GM12878 (cell line): ENCODE measurements at regions of chr4 and their contacts with region 1.

Region 1: DNA sequence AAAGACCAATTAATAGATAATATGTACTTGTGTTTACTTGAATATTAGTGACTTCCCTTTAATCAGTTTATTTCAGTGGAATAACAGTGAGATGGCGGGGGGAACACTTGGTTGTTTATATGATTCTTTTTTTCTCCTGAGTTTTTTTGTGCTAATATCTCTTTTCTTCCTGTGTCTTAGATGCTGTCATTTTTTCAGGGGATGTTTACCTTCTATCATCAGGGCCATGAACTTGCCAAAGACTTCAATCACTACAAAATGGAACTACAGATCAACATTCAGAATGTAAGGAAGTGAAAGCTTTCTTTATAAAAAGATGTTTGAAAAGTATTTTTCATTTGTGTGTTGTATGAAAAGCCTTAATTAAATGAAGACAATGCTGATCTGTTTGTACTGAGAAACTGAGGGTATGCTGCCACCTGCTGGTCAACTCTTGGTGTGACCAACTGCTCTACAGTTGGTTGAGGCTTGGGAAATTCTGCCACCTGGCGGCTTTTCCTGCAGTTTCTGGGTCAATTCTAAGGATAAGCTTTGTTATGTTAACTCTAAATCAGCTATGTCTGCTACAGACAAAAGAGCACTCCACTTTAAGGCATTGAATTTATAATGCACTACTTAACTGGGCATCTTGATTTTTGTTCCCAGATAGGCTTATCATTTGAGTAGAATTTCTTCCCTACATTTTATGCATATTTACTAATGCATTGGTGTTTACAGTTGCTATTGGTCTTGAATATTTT is 134.8 kb downstream of the ARHGAP10 start:
- DNase-seq: peak; percentile 66
- ATAC-seq: peak; percentile 94
- H3K4me3 ChIP-seq: no peak overlapping the region
- H3K27ac ChIP-seq: no peak overlapping the region
- H3K4me1 ChIP-seq: 0 out of 2 replicates have a peak, but pooled peaks cover 2% of the 10 kb centered on the region
- H3K27me3 ChIP-seq: no peaks in the 10 kb centered on the region
- CTCF ChIP-seq: peak; percentile 92 to 100 (median 99); a peak in 5 of 6 replicates
- EP300 ChIP-seq: no peak
- POLR2A ChIP-seq: no peak
- RAD21 ChIP-seq: peak; percentile 100

Region 2: GRCh38 chr4:147123146-147123545 is 743.6 kb before region 1 on chr4:
- CTCF ChIA-PET with region 1: no interaction called
- POLR2A ChIA-PET with region 1: no interaction called
- RAD21 ChIA-PET with region 1: no interaction called
- SMC1A ChIA-PET with region 1: no interaction called
- in situ Hi-C with region 1: no loop called
- intact Hi-C with region 1: no loop called
- DNase-seq: no peak
- ATAC-seq: no peak
- H3K4me3 ChIP-seq: no peak overlapping the region
- H3K27ac ChIP-seq: no peak overlapping the region
- H3K4me1 ChIP-seq: peaks cover 2% of the 10 kb centered on the region; the same call in 1 of the 2 replicates
- H3K27me3 ChIP-seq: no peaks in the 10 kb centered on the region
- CTCF ChIP-seq: no peak
- EP300 ChIP-seq: no peak
- POLR2A ChIP-seq: no peak
- RAD21 ChIP-seq: no peak

Region 3: DNA sequence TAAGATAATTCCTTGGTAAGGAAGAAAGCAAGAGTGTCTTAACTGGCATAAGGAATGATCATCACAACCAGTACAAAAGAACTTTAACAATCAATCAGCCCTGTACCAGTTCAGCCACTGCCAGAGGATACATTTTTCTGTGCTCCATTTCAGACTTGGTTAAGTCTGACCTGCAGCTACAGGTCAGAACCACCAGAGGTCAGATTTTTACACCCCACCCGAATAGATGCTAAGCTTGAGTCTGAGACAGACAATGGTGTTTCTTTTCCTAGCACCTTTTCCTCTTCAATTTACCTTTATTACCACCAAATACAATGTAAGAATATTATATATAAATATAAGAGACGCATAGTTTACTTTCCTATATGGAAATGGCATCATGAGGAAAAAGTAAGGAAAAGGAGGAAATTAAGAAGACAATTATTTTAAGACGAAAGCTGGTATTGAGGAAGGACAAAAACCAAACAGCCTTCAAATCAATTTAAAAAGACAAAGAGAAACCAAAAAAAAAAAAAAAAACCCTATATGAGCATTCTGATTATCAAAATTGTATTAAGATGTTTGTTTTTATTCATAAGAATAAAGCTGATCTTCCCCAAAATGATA is 705.7 kb before region 1 on chr4:
- CTCF ChIA-PET with region 1: interaction called, 8 read pairs
- POLR2A ChIA-PET with region 1: no interaction called
- RAD21 ChIA-PET with region 1: interaction called, 4 read pairs
- SMC1A ChIA-PET with region 1: no interaction called
- in situ Hi-C with region 1: loop called (anchors 10 kb)
- intact Hi-C with region 1: loop called (anchors 5 kb)
- DNase-seq: no peak
- ATAC-seq: peak; percentile 89
- H3K4me3 ChIP-seq: no peak overlapping the region
- H3K27ac ChIP-seq: no peak overlapping the region
- H3K4me1 ChIP-seq: no peaks in the 10 kb centered on the region
- H3K27me3 ChIP-seq: peaks cover 0 to 7% of the 10 kb centered on the region in 2 experiments; a peak in 2 of 4 replicates
- CTCF ChIP-seq: peak; percentile 68 to 79 (median 71)
- EP300 ChIP-seq: no peak
- POLR2A ChIP-seq: no peak
- RAD21 ChIP-seq: peak; percentile 79

Region 4: GRCh38 chr4:147570616-147571015 is 296.1 kb before region 1 on chr4:
- CTCF ChIA-PET with region 1: no interaction called
- POLR2A ChIA-PET with region 1: no interaction called
- RAD21 ChIA-PET with region 1: no interaction called
- SMC1A ChIA-PET with region 1: no interaction called
- in situ Hi-C with region 1: no loop called
- intact Hi-C with region 1: no loop called
- DNase-seq: no peak
- ATAC-seq: no peak
- H3K4me3 ChIP-seq: no peak overlapping the region
- H3K27ac ChIP-seq: no peak overlapping the region
- H3K4me1 ChIP-seq: no peaks in the 10 kb centered on the region
- H3K27me3 ChIP-seq: no peaks in the 10 kb centered on the region
- CTCF ChIP-seq: no peak
- EP300 ChIP-seq: no peak
- POLR2A ChIP-seq: no peak
- RAD21 ChIP-seq: no peak

Region 5: DNA sequence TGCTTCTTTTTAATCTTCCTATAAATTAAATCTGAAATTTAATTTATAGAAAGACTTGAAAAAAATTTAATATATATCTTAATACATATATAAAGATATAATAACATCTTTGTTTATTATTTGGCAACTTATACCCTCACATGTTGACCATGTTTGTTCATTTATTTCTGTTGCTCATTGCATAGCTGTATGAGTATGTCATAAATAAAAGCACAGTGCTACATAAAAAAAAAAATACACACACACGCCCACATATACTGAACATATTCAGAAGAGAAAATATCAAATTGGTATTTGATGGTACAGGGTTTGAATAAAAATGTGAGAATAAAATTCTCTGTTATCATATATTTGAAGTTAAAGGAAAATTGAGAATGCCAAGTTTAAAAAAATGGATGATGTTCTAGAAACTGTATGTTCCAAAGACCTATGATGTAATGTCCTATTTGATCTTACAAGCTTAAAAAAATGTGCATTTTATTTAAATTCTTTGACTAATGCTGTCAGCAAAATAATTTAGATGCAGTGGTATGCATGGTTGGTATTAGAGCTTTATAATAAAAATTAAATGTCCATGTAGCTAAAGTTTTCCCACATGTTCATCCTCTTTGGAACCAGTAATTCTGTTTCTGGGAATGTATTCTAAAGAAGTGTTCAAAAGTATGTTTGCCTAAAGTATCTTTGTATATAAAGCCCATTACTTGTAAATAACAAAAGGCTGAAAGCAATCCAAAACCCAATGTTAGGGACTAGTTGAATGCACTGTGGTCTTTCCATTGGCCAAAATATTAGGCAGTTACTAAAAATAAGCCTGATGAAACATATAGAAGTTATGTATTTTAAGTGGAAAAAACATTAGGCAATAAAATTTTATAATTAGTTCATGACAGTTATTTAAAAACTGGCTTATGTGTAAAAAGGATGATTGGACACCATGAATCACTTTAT is 236.6 kb before region 1 on chr4:
- CTCF ChIA-PET with region 1: interaction called, 11 read pairs
- POLR2A ChIA-PET with region 1: no interaction called
- RAD21 ChIA-PET with region 1: interaction called, 12 read pairs
- SMC1A ChIA-PET with region 1: interaction called, 10 read pairs
- in situ Hi-C with region 1: no loop called
- intact Hi-C with region 1: no loop called
- DNase-seq: no peak
- ATAC-seq: no peak
- H3K4me3 ChIP-seq: no peak overlapping the region
- H3K27ac ChIP-seq: no peak overlapping the region
- H3K4me1 ChIP-seq: no peaks in the 10 kb centered on the region
- H3K27me3 ChIP-seq: no peaks in the 10 kb centered on the region
- CTCF ChIP-seq: no peak
- EP300 ChIP-seq: no peak
- POLR2A ChIP-seq: no peak
- RAD21 ChIP-seq: no peak

Region 6: GRCh38 chr4:147696863-147697262 is 169.8 kb before region 1 on chr4:
- CTCF ChIA-PET with region 1: interaction called, 54 read pairs
- POLR2A ChIA-PET with region 1: interaction called, 4 read pairs
- RAD21 ChIA-PET with region 1: interaction called, 15 read pairs
- SMC1A ChIA-PET with region 1: interaction called, 24 read pairs
- in situ Hi-C with region 1: no loop called
- intact Hi-C with region 1: no loop called
- DNase-seq: no peak
- ATAC-seq: no peak
- H3K4me3 ChIP-seq: no peak overlapping the region
- H3K27ac ChIP-seq: no peak overlapping the region
- H3K4me1 ChIP-seq: no peaks in the 10 kb centered on the region
- H3K27me3 ChIP-seq: peaks cover 0 to 5% of the 10 kb centered on the region in 2 experiments; a peak in 1 of 4 replicates
- CTCF ChIP-seq: no peak
- EP300 ChIP-seq: no peak
- POLR2A ChIP-seq: no peak
- RAD21 ChIP-seq: no peak

Region 7: DNA sequence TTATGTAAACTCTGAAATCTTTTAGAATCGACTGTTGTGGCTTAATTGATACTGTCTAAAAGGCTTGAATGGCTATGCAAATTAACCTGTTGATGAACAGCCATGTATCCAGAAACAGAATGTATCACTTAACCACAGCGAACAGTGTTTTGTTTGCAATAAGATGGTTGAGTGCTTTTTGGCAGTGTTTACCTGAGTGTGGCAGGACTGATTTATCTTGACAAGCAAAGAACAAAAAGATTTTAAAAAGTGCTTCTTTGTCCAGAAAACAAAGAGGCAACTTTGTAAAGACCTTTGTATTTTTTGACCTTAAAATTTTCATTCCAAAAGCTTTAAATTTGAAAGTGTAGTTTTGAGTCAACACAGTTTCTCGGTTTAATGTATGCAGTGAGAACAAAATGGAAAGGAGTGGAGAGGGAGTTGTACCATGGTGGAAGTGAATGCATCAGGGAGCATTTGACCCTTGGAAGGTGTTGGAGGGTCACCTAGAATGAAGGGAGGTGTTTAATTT is 116.8 kb before region 1 on chr4:
- CTCF ChIA-PET with region 1: interaction called, 13 read pairs
- POLR2A ChIA-PET with region 1: no interaction called
- RAD21 ChIA-PET with region 1: interaction called, 8 read pairs
- SMC1A ChIA-PET with region 1: interaction called, 9 read pairs
- in situ Hi-C with region 1: no loop called
- intact Hi-C with region 1: no loop called
- DNase-seq: peak; percentile 73
- ATAC-seq: peak; percentile 97
- H3K4me3 ChIP-seq: peak overlapping the region; percentile 39; the same call in 1 of the 2 replicates
- H3K27ac ChIP-seq: peak overlapping the region; percentile 52
- H3K4me1 ChIP-seq: peaks cover 17% of the 10 kb centered on the region
- H3K27me3 ChIP-seq: no peaks in the 10 kb centered on the region
- CTCF ChIP-seq: no peak
- EP300 ChIP-seq: peak; percentile 29 to 73; a peak in 2 of 4 replicates
- POLR2A ChIP-seq: no peak
- RAD21 ChIP-seq: no peak

Region 8: GRCh38 chr4:147793569-147794313 is 73.0 kb before region 1 on chr4:
- CTCF ChIA-PET with region 1: interaction called, 81 read pairs
- POLR2A ChIA-PET with region 1: no interaction called
- RAD21 ChIA-PET with region 1: interaction called, 36 read pairs
- SMC1A ChIA-PET with region 1: interaction called, 19 read pairs
- in situ Hi-C with region 1: no loop called
- intact Hi-C with region 1: no loop called
- DNase-seq: no peak
- ATAC-seq: peak; percentile 65
- H3K4me3 ChIP-seq: peak overlapping the region; percentile 4; the same call in 1 of the 2 replicates
- H3K27ac ChIP-seq: peak overlapping the region; percentile 72
- H3K4me1 ChIP-seq: peaks cover 37% of the 10 kb centered on the region
- H3K27me3 ChIP-seq: no peaks in the 10 kb centered on the region
- CTCF ChIP-seq: no peak
- EP300 ChIP-seq: no peak
- POLR2A ChIP-seq: no peak
- RAD21 ChIP-seq: no peak

Region 9: DNA sequence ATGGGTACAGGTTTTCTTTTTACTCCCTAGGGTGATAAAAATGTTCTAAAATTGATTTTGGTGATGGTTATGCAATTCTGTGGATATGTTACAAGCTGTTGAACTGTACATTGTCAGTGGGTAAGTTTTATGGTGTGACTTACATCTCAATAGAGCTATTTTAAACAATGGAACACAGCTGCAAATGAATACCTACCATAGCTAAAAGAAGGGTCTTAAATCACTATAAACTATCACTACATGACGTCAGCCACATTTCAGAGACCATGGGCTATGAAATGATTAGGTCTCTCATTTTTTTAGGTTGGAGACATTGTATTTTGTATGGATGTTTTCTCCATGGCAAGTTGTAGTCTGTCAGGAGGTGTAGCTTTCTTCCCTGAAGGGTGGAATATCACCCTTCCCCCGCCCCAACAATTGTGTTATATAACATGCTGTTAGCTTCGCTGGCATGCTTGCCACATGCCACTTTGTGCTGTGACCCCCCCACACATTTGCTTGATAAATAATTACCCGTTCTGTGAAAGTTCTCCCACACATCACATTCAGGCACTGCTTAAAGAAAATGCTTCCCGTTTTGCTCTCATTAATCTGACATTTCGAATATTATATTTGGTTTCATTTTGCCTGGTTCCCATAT is 24.9 kb after region 1 on chr4:
- CTCF ChIA-PET with region 1: interaction called, 14 read pairs
- POLR2A ChIA-PET with region 1: no interaction called
- RAD21 ChIA-PET with region 1: interaction called, 6 read pairs
- SMC1A ChIA-PET with region 1: interaction called, 5 read pairs
- in situ Hi-C with region 1: no loop called
- intact Hi-C with region 1: no loop called
- DNase-seq: no peak
- ATAC-seq: no peak
- H3K4me3 ChIP-seq: no peak overlapping the region
- H3K27ac ChIP-seq: no peak overlapping the region
- H3K4me1 ChIP-seq: no peaks in the 10 kb centered on the region
- H3K27me3 ChIP-seq: no peaks in the 10 kb centered on the region
- CTCF ChIP-seq: no peak
- EP300 ChIP-seq: no peak
- POLR2A ChIP-seq: no peak
- RAD21 ChIP-seq: no peak

Region 10: GRCh38 chr4:148273501-148273986 is 406.8 kb after region 1 on chr4:
- CTCF ChIA-PET with region 1: no interaction called
- POLR2A ChIA-PET with region 1: no interaction called
- RAD21 ChIA-PET with region 1: no interaction called
- SMC1A ChIA-PET with region 1: no interaction called
- in situ Hi-C with region 1: no loop called
- intact Hi-C with region 1: no loop called
- DNase-seq: no peak
- ATAC-seq: no peak
- H3K4me3 ChIP-seq: no peak overlapping the region
- H3K27ac ChIP-seq: no peak overlapping the region
- H3K4me1 ChIP-seq: no peaks in the 10 kb centered on the region
- H3K27me3 ChIP-seq: no peaks in the 10 kb centered on the region
- CTCF ChIP-seq: no peak
- EP300 ChIP-seq: no peak
- POLR2A ChIP-seq: no peak
- RAD21 ChIP-seq: no peak